ENCODE measurements at regions of chr3 and their contacts with region 1.

Region 1: DNA sequence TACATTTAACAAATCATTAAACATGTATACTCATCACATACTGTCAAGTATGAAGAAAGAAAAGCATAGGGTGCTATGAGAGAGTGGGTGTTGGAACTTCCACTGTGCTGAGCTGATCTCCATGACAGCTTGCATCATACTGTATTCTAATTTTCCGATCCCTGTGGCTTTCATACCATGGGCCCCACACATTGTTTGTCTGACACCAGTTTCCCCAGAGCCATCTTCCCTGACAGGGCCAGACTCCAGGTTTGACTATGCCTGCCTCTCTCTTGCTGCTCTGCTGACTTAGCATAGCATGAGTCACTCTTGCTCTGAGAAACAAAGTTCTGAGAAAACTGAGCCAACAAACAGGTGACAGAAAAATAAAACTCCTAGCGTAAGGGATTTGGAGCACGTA is 37.0 kb upstream of the CASR start:
- DNase-seq: peak; percentile 62
- H3K4me3 Mint-ChIP-seq: peak overlapping the region; percentile 0
- H3K27ac Mint-ChIP-seq: peak overlapping the region; percentile 69
- H3K4me1 Mint-ChIP-seq: peaks cover 23% of the 10 kb centered on the region
- H3K27me3 Mint-ChIP-seq: peaks cover 2% of the 10 kb centered on the region

Region 2: GRCh38 chr3:121545574-121546455 is 600.7 kb before region 1 on chr3 and contains the start of gene POLQ:
- intact Hi-C with region 1: loop called (anchors 1 kb)
- DNase-seq: peak; percentile 83
- H3K4me3 Mint-ChIP-seq: peak within 1 kb of the TSS; percentile 89
- H3K27ac Mint-ChIP-seq: peak within 1 kb of the TSS; percentile 88
- H3K4me1 Mint-ChIP-seq: peaks cover 32% of the 10 kb centered on the region
- H3K27me3 Mint-ChIP-seq: peaks cover 2% of the 10 kb centered on the region
- total RNA-seq, gene POLQ: 29.0 and 30.1 TPM in 2 replicates

Region 3: GRCh38 chr3:121989943-121990342 is 156.5 kb before region 1 on chr3:
- intact Hi-C with region 1: loop called (anchors 1 kb)
- DNase-seq: no peak
- H3K4me3 Mint-ChIP-seq: no peak overlapping the region
- H3K27ac Mint-ChIP-seq: no peak overlapping the region
- H3K4me1 Mint-ChIP-seq: peaks cover 25% of the 10 kb centered on the region
- H3K27me3 Mint-ChIP-seq: peaks cover 3% of the 10 kb centered on the region

Region 4: GRCh38 chr3:122074621-122075265 is 71.7 kb before region 1 on chr3:
- intact Hi-C with region 1: loop called (anchors 1 kb)
- DNase-seq: peak; percentile 43
- H3K4me3 Mint-ChIP-seq: peak overlapping the region; percentile 71
- H3K27ac Mint-ChIP-seq: peak overlapping the region; percentile 87
- H3K4me1 Mint-ChIP-seq: peaks cover 62% of the 10 kb centered on the region
- H3K27me3 Mint-ChIP-seq: no peaks in the 10 kb centered on the region

Region 5: GRCh38 chr3:122258757-122259371 is 112.4 kb after region 1 on chr3:
- intact Hi-C with region 1: loop called (anchors 1 kb)
- DNase-seq: peak; percentile 47
- H3K4me3 Mint-ChIP-seq: no peak overlapping the region
- H3K27ac Mint-ChIP-seq: peak overlapping the region; percentile 35
- H3K4me1 Mint-ChIP-seq: peaks cover 22% of the 10 kb centered on the region
- H3K27me3 Mint-ChIP-seq: peaks cover 17% of the 10 kb centered on the region

Region 6: GRCh38 chr3:122365073-122365472 is 218.6 kb after region 1 on chr3:
- intact Hi-C with region 1: loop called (anchors 1 kb)
- DNase-seq: no peak
- H3K4me3 Mint-ChIP-seq: peak overlapping the region; percentile 42
- H3K27ac Mint-ChIP-seq: peak overlapping the region; percentile 91
- H3K4me1 Mint-ChIP-seq: peaks cover 47% of the 10 kb centered on the region
- H3K27me3 Mint-ChIP-seq: no peaks in the 10 kb centered on the region